ENCODE measurements at regions of chr5 and their contacts with region 1.

Region 1: GRCh38 chr5:177113566-177114424 is 19.8 kb upstream of the NSD1 start:
- DNase-seq: peak; percentile 86
- ATAC-seq: peak; percentile 65
- H3K4me3 ChIP-seq: no peak overlapping the region
- H3K4me3 Mint-ChIP-seq: no peak overlapping the region
- H3K27ac ChIP-seq: no peak overlapping the region
- H3K27ac Mint-ChIP-seq: peak overlapping the region; percentile 46
- H3K4me1 ChIP-seq: peaks cover 10 to 21% of the 10 kb centered on the region in 2 donors
- H3K4me1 Mint-ChIP-seq: peaks cover 18% of the 10 kb centered on the region
- H3K27me3 ChIP-seq: no peaks in the 10 kb centered on the region
- H3K27me3 Mint-ChIP-seq: no peaks in the 10 kb centered on the region
- CTCF ChIP-seq: peak; percentile 98

Region 2: GRCh38 chr5:176660860-176661641 is 452.7 kb before region 1 on chr5:
- CTCF ChIA-PET with region 1: interaction called, 78 read pairs
- POLR2A ChIA-PET with region 1: no interaction called
- intact Hi-C with region 1: no loop called
- DNase-seq: peak; percentile 89
- ATAC-seq: peak; percentile 76
- H3K4me3 ChIP-seq: no peak overlapping the region
- H3K4me3 Mint-ChIP-seq: no peak overlapping the region
- H3K27ac ChIP-seq: no peak overlapping the region
- H3K27ac Mint-ChIP-seq: peak overlapping the region; percentile 67
- H3K4me1 ChIP-seq: peaks cover 25 to 30% of the 10 kb centered on the region in 2 donors
- H3K4me1 Mint-ChIP-seq: peaks cover 32% of the 10 kb centered on the region
- H3K27me3 ChIP-seq: peaks cover 0 to 16% (median 2%) of the 10 kb centered on the region in 4 experiments
- H3K27me3 Mint-ChIP-seq: peaks cover 23% of the 10 kb centered on the region
- CTCF ChIP-seq: peak; percentile 96

Region 3: GRCh38 chr5:177086924-177087706 is 26.7 kb before region 1 on chr5:
- CTCF ChIA-PET with region 1: interaction called, 18 read pairs
- POLR2A ChIA-PET with region 1: no interaction called
- intact Hi-C with region 1: loop called (anchors 2 kb)
- DNase-seq: peak; percentile 88
- ATAC-seq: peak; percentile 76
- H3K4me3 ChIP-seq: peak overlapping the region; percentile 18 to 56 (median 48)
- H3K4me3 Mint-ChIP-seq: peak overlapping the region; percentile 49
- H3K27ac ChIP-seq: no peak overlapping the region
- H3K27ac Mint-ChIP-seq: no peak overlapping the region
- H3K4me1 ChIP-seq: peaks cover 12 to 22% of the 10 kb centered on the region in 2 donors
- H3K4me1 Mint-ChIP-seq: peaks cover 23% of the 10 kb centered on the region
- H3K27me3 ChIP-seq: peaks cover 0 to 21% (median 4%) of the 10 kb centered on the region in 4 experiments
- H3K27me3 Mint-ChIP-seq: peaks cover 8% of the 10 kb centered on the region
- CTCF ChIP-seq: peak; percentile 83

Region 4: GRCh38 chr5:177209610-177210009 is 95.8 kb after region 1 on chr5:
- CTCF ChIA-PET with region 1: interaction called, 4 read pairs
- POLR2A ChIA-PET with region 1: no interaction called
- intact Hi-C with region 1: loop called (anchors 10 kb)
- DNase-seq: no peak
- ATAC-seq: no peak
- H3K4me3 ChIP-seq: no peak overlapping the region
- H3K4me3 Mint-ChIP-seq: no peak overlapping the region
- H3K27ac ChIP-seq: no peak overlapping the region
- H3K27ac Mint-ChIP-seq: no peak overlapping the region
- H3K4me1 ChIP-seq: no peaks in the 10 kb centered on the region
- H3K4me1 Mint-ChIP-seq: no peaks in the 10 kb centered on the region
- H3K27me3 ChIP-seq: no peaks in the 10 kb centered on the region
- H3K27me3 Mint-ChIP-seq: no peaks in the 10 kb centered on the region
- CTCF ChIP-seq: no peak

Region 5: DNA sequence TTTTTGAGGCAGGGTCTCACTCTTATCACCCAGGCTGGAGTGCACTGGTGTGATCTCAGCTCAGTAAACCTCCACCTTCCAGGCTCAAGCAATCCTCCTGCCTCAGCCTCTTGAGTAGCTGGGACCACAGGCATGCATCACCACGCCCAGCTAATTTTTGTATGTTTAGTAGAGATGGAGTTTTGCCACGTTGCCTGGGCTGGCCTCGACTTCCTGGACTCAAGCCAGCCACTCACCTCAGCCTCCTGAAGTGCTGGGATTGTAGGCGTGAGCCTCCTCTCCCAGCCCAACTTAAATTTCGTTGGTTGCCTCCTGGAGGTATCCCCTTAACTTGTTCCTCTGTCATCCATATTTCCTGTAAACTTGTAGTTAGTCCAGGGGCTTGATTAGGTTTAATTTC is 142.5 kb after region 1 on chr5:
- CTCF ChIA-PET with region 1: interaction called, 21 read pairs
- POLR2A ChIA-PET with region 1: no interaction called
- intact Hi-C with region 1: no loop called
- DNase-seq: no peak
- ATAC-seq: no peak
- H3K4me3 ChIP-seq: no peak overlapping the region
- H3K4me3 Mint-ChIP-seq: no peak overlapping the region
- H3K27ac ChIP-seq: no peak overlapping the region
- H3K27ac Mint-ChIP-seq: no peak overlapping the region
- H3K4me1 ChIP-seq: no peaks in the 10 kb centered on the region
- H3K4me1 Mint-ChIP-seq: no peaks in the 10 kb centered on the region
- H3K27me3 ChIP-seq: no peaks in the 10 kb centered on the region
- H3K27me3 Mint-ChIP-seq: no peaks in the 10 kb centered on the region
- CTCF ChIP-seq: no peak

Region 6: DNA sequence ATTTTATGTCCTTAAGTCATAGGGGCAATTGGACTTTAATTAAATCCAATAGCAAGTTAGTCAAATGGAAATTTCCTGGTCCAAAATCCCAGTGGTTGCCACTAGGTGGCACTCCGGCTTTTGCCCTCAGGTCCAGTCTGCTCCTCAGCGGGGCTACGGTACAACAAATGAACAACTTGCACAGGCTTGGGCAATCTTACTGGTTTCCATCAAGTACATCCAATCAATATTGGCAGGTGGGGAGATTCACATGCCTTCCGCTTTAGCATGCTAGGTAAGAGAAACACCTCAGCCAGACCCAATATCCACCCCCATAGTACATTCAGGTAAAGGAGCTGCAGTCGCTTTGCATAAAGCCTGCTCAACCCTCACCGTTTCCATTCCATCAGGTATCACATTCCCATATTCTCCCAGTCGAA is 204.2 kb after region 1 on chr5:
- CTCF ChIA-PET with region 1: interaction called, 10 read pairs
- POLR2A ChIA-PET with region 1: no interaction called
- intact Hi-C with region 1: no loop called
- DNase-seq: peak; percentile 81
- ATAC-seq: peak; percentile 78
- H3K4me3 ChIP-seq: no peak overlapping the region
- H3K4me3 Mint-ChIP-seq: no peak overlapping the region
- H3K27ac ChIP-seq: no peak overlapping the region
- H3K27ac Mint-ChIP-seq: no peak overlapping the region
- H3K4me1 ChIP-seq: peaks cover 7 to 14% of the 10 kb centered on the region in 2 donors
- H3K4me1 Mint-ChIP-seq: peaks cover 25% of the 10 kb centered on the region
- H3K27me3 ChIP-seq: no peaks in the 10 kb centered on the region
- H3K27me3 Mint-ChIP-seq: no peaks in the 10 kb centered on the region
- CTCF ChIP-seq: peak; percentile 94

Region 7: GRCh38 chr5:178069909-178070308 is 956.1 kb after region 1 on chr5:
- CTCF ChIA-PET with region 1: no interaction called
- POLR2A ChIA-PET with region 1: no interaction called
- intact Hi-C with region 1: no loop called
- DNase-seq: peak; percentile 75
- ATAC-seq: peak; percentile 78
- H3K4me3 ChIP-seq: no peak overlapping the region
- H3K4me3 Mint-ChIP-seq: no peak overlapping the region
- H3K27ac ChIP-seq: no peak overlapping the region
- H3K27ac Mint-ChIP-seq: no peak overlapping the region
- H3K4me1 ChIP-seq: peaks cover 26 to 27% of the 10 kb centered on the region in 2 donors
- H3K4me1 Mint-ChIP-seq: peaks cover 16% of the 10 kb centered on the region
- H3K27me3 ChIP-seq: peaks cover 0 to 18% (median 4%) of the 10 kb centered on the region in 4 experiments
- H3K27me3 Mint-ChIP-seq: peaks cover 18% of the 10 kb centered on the region
- CTCF ChIP-seq: peak; percentile 63